Activated naive CD4-positive, alpha-beta T cell treated with anti-CD3 and anti-CD28 coated beads, Interleukin-2, amount 10 ng/mL, durations not matched to agents 7 days and 5 days (primary cell): ENCODE measurements at regions of chr1 and their contacts with region 1.

Region 1: GRCh38 chr1:94854458-94855306 is 34.5 kb downstream of the SLC44A3 start:
- DNase-seq: peak; percentile 88
- H3K4me3 Mint-ChIP-seq: no peak overlapping the region
- H3K27ac Mint-ChIP-seq: no peak overlapping the region
- H3K4me1 Mint-ChIP-seq: no peaks in the 10 kb centered on the region
- H3K27me3 Mint-ChIP-seq: peaks cover 14% of the 10 kb centered on the region

Region 2: GRCh38 chr1:94773931-94774422 is 80.7 kb before region 1 on chr1:
- CTCF ChIA-PET with region 1: no interaction called
- DNase-seq: no peak
- H3K4me3 Mint-ChIP-seq: no peak overlapping the region
- H3K27ac Mint-ChIP-seq: no peak overlapping the region
- H3K4me1 Mint-ChIP-seq: no peaks in the 10 kb centered on the region
- H3K27me3 Mint-ChIP-seq: peaks cover 18% of the 10 kb centered on the region

Region 3: GRCh38 chr1:94795434-94795833 is 59.2 kb before region 1 on chr1:
- CTCF ChIA-PET with region 1: no interaction called
- DNase-seq: no peak
- H3K4me3 Mint-ChIP-seq: no peak overlapping the region
- H3K27ac Mint-ChIP-seq: peak overlapping the region; percentile 45
- H3K4me1 Mint-ChIP-seq: peaks cover 8% of the 10 kb centered on the region
- H3K27me3 Mint-ChIP-seq: no peaks in the 10 kb centered on the region

Region 4: DNA sequence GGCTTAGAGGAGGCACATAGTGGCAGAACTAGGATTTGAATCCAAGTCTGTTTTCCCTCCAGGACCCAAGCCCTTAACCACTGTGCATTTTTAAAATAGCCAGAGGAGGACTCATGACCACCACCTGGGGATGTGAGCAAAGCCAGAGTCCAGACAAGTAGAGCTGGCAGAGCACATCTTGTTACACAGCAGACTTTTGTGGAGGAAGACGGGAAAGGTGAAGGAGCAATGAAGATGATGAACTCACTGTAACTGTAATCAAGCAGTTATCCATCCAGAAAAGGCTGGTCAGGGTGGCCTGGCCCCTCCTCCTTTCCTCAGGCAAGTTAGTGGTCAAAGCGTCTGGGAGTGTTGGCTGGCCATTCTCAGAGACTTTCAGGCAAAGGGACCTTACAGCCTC is 16.3 kb after region 1 on chr1:
- CTCF ChIA-PET with region 1: interaction called, 14 read pairs
- DNase-seq: no peak
- H3K4me3 Mint-ChIP-seq: no peak overlapping the region
- H3K27ac Mint-ChIP-seq: no peak overlapping the region
- H3K4me1 Mint-ChIP-seq: peaks cover 10% of the 10 kb centered on the region
- H3K27me3 Mint-ChIP-seq: peaks cover 16% of the 10 kb centered on the region

Region 5: DNA sequence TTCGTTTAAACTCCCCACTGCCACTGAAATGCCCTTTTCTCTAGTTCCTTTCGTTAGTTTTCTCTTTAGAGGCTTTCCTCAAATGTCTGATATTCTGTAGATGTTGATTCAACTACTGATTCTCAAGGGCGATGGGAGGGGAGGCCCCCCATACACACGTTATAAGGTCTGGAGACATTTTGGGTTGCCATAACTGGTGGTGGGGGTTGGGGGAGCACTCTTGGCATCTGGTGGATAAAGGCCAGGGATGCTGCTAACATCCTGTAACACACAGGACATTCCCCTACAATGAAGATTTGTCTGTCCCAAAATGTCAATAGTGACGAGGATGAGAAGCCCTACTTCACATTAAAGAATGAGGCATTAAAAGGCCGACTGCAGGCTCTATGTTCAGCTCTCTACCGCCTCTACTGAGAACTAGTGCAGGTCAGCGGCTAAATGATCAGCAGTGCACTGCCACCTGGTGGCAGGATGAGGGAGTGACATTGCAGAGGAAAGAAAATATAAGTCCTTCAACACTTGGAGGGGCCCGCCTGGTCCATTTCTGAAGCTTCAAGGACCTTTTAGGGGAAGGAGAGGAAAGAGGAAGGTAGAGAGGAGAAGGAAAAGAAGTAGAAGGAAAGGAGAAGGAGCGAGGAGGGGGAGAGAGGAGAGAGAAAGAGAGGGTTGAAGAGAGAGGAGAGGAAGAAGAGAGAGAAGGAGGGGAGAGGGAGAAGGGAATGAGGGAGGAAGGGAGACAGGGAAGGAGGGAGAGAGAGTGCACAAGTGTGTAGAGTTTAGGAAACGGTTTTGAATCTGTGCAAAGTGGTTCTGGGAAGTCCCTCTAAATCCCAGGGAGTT is 188.7 kb after region 1 on chr1:
- CTCF ChIA-PET with region 1: interaction called, 138 read pairs
- DNase-seq: peak; percentile 83
- H3K4me3 Mint-ChIP-seq: no peak overlapping the region
- H3K27ac Mint-ChIP-seq: no peak overlapping the region
- H3K4me1 Mint-ChIP-seq: no peaks in the 10 kb centered on the region
- H3K27me3 Mint-ChIP-seq: no peaks in the 10 kb centered on the region